ENCODE measurements at regions of chr3 and their contacts with region 1.

Region 1: GRCh38 chr3:183766745-183767606 is 58.4 kb downstream of the MAP6D1 start:
- DNase-seq: peak; percentile 83
- H3K4me3 Mint-ChIP-seq: no peak overlapping the region
- H3K27ac Mint-ChIP-seq: peak overlapping the region; percentile 14
- H3K4me1 Mint-ChIP-seq: peaks cover 16% of the 10 kb centered on the region
- H3K27me3 Mint-ChIP-seq: no peaks in the 10 kb centered on the region
- CTCF ChIP-seq: peak; percentile 78

Region 2: GRCh38 chr3:183468424-183468823 is 298.6 kb before region 1 on chr3:
- CTCF ChIA-PET with region 1: interaction called, 33 read pairs
- POLR2A ChIA-PET with region 1: no interaction called
- intact Hi-C with region 1: loop called (anchors 1 kb)
- DNase-seq: no peak
- H3K4me3 Mint-ChIP-seq: no peak overlapping the region
- H3K27ac Mint-ChIP-seq: no peak overlapping the region
- H3K4me1 Mint-ChIP-seq: no peaks in the 10 kb centered on the region
- H3K27me3 Mint-ChIP-seq: no peaks in the 10 kb centered on the region
- CTCF ChIP-seq: no peak

Region 3: DNA sequence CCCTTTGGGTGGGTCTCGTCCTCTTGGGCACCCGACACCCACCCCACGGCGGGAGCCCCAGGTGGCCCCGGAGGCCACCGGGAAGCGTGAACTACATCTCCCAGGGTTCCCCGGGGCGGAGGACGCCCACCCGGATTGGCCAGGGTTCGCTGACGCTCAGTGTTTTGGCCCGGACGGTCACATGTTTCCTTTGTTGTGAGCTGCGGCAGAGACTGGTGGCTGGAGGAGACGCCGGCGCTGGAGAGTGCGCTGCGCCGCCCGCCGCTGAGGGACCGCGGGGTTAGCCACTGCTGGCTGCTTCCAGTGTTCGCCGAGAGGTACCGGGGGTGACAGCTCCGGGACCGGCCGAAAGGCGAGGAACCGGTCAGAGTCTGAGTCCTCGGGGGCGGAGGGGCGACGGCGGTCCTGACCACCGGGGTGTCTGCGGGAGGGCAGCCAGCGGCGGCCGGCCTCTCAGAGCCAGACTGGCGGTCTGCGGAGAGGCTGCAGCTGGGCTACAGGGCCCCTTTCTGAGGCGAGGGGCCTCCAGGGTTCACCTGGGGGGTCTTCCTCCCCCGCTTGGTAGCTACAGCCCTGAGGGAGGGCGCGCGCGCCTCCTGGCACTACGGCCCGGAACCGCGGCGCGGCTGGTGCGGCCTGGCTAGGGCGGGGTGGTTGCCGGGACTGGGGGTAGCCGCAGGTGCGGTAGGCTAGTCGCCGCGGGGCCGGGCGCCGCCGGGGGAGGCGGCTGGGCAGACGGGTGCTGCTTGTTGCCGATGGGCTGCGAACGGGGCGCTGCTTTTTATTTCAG is 131.3 kb before region 1 on chr3 and contains the start of gene KLHL24:
- CTCF ChIA-PET with region 1: no interaction called
- POLR2A ChIA-PET with region 1: interaction called, 3 read pairs
- intact Hi-C with region 1: loop called (anchors 10 kb)
- DNase-seq: peak; percentile 94
- H3K4me3 Mint-ChIP-seq: peak within 1 kb of the TSS; percentile 86
- H3K27ac Mint-ChIP-seq: peak within 1 kb of the TSS; percentile 93
- H3K4me1 Mint-ChIP-seq: no peaks in the 10 kb centered on the region
- H3K27me3 Mint-ChIP-seq: no peaks in the 10 kb centered on the region
- CTCF ChIP-seq: no peak
- total RNA-seq, gene KLHL24: 13.0 and 17.3 TPM in 2 replicates

Region 4: DNA sequence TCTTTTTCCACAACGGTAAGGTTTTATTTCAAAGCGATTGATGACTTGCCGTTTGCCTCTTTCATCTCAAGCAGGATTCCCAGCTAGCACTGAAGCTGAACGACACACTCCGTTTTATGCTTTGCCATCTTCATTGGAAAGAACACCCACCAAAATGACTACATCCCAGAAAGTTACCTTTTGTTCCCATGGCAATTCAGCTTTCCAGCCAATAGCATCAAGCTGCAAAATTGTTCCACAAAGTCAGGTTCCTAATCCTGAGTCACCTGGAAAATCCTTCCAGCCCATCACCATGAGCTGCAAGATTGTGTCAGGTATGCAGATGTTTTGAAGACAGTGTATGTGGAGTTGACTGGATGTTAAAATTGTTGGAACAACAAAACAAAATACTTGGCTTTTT is 12.9 kb before region 1 on chr3:
- CTCF ChIA-PET with region 1: interaction called, 11 read pairs
- POLR2A ChIA-PET with region 1: interaction called, 5 read pairs
- intact Hi-C with region 1: no loop called
- DNase-seq: no peak
- H3K4me3 Mint-ChIP-seq: no peak overlapping the region
- H3K27ac Mint-ChIP-seq: no peak overlapping the region
- H3K4me1 Mint-ChIP-seq: no peaks in the 10 kb centered on the region
- H3K27me3 Mint-ChIP-seq: no peaks in the 10 kb centered on the region
- CTCF ChIP-seq: no peak

Region 5: DNA sequence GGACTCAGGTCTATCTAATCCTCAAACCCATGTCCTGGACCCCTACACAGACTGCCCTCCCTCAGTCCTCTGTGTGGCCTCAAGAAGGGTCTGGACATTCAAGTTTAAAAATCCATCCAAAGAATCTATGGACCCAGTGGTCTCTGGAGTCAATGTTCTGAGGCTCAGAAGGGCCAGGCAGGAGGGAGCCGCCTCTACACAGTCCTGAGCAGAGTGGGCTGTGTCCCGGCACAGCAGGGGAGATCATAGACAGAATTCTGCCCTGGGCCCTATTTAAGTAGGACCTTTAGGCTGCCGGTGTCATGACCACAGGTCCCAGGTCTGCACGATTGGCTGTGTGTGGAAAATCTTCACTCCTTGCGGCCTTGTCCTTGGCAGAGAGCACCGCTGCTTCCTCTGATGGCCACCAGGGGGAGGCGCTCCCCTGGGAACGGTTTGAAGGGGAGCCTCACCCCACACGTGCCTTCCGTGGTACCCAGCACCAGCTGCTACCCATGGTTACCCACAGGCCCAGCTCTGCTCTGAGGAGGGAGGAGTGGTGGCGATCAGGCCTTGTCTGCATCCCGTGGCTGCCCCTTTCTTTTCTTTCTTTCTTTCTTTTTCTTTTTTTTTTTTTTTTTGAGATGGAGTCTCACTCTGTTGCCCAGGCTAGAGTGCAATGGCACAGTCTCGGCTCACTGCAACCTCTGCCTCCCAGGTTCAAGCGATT is 650.8 kb after region 1 on chr3:
- CTCF ChIA-PET with region 1: no interaction called
- POLR2A ChIA-PET with region 1: no interaction called
- intact Hi-C with region 1: no loop called
- DNase-seq: peak; percentile 72
- H3K4me3 Mint-ChIP-seq: no peak overlapping the region
- H3K27ac Mint-ChIP-seq: no peak overlapping the region
- H3K4me1 Mint-ChIP-seq: no peaks in the 10 kb centered on the region
- H3K27me3 Mint-ChIP-seq: peaks cover 2% of the 10 kb centered on the region
- CTCF ChIP-seq: peak; percentile 91

Measured in MCF 10A (cell line).